ENCODE measurements at regions of chr1 and their contacts with region 1.

Region 1: GRCh38 chr1:115595279-115596079 is 46.3 kb upstream of the VANGL1 start:
- DNase-seq: peak; percentile 85
- ATAC-seq: peak; percentile 70
- H3K4me3 Mint-ChIP-seq: no peak overlapping the region
- H3K27ac Mint-ChIP-seq: no peak overlapping the region
- H3K4me1 Mint-ChIP-seq: no peaks in the 10 kb centered on the region
- H3K27me3 Mint-ChIP-seq: peaks cover 3% of the 10 kb centered on the region

Region 2: DNA sequence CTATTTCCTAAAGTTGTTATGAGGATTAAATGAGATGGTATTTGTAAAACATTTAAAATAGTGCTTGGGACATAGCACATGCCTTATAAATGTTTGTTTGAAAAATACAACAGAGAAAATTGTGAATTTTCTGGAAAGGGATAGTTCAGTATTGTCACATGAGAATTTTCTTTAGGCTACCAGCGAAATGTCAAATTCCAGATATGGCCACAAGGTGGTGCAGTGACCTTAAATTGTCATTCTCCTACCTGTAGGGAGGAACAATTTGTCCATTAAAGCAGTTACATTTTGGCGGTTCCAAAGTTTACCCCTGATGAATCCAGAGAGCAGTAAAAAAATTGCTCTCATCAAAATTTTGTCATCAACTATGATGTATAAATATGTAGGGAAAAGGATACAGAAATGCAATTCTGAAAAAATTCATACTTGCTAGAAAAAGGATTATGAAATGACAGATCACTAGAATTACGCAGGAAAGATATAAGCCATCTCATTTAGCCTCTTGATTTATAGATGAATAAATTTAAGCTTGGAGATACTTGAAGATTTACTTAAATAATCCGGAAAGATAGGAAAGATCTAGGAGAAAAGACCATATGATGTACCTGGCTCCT is 616.1 kb before region 1 on chr1:
- CTCF ChIA-PET with region 1: interaction called, 3 read pairs
- POLR2A ChIA-PET with region 1: no interaction called
- intact Hi-C with region 1: loop called in 1 of 2 experiments (anchors 5 kb)
- DNase-seq: peak; percentile 79
- ATAC-seq: no peak
- H3K4me3 Mint-ChIP-seq: no peak overlapping the region
- H3K27ac Mint-ChIP-seq: no peak overlapping the region
- H3K4me1 Mint-ChIP-seq: no peaks in the 10 kb centered on the region
- H3K27me3 Mint-ChIP-seq: peaks cover 9% of the 10 kb centered on the region

Region 3: DNA sequence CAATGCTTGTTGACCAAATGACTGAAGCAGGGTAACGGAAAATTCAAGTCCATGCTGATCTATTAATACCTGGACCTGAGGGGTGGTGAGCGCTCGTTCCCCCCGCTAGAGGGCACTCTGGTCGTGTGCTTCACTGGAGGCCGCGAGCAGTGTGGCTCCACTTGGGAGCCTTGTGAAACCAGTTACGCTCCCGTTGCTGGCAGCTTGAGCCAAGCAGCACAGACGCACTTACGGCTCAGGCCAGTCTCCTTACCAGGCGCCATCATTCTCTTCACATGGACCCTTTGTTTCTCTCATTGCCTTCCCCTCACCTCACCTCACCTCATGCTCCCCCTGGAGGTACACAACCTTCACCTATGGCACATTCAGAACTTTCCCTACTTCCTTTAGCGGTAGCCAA is 456.5 kb before region 1 on chr1:
- CTCF ChIA-PET with region 1: interaction called, 18 read pairs
- POLR2A ChIA-PET with region 1: no interaction called
- intact Hi-C with region 1: loop called (anchors 1 to 2 kb)
- DNase-seq: peak; percentile 79
- ATAC-seq: peak; percentile 88
- H3K4me3 Mint-ChIP-seq: peak overlapping the region; percentile 11
- H3K27ac Mint-ChIP-seq: no peak overlapping the region
- H3K4me1 Mint-ChIP-seq: peaks cover 4% of the 10 kb centered on the region
- H3K27me3 Mint-ChIP-seq: peaks cover 11% of the 10 kb centered on the region

Region 4: DNA sequence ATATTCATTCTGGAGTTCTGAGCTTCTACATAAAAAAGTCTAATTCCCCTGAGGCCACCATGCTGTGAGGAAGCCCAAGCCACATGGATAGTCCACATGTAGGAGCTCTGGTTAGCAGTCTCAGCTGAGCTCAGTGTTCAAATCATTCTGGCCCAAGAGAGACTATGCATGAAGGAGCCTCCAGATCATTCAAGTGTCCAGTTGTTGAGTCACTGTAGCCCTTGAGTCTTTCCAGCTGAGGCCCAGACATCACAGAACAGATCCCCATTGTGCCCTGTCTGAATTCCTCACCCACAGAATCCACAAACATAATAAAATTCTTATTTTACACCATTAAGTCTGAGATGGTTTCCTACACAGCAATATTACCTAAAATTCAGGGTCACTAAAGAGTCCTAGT is 150.4 kb before region 1 on chr1:
- CTCF ChIA-PET with region 1: no interaction called
- POLR2A ChIA-PET with region 1: no interaction called
- intact Hi-C with region 1: no loop called
- DNase-seq: no peak
- ATAC-seq: no peak
- H3K4me3 Mint-ChIP-seq: no peak overlapping the region
- H3K27ac Mint-ChIP-seq: no peak overlapping the region
- H3K4me1 Mint-ChIP-seq: no peaks in the 10 kb centered on the region
- H3K27me3 Mint-ChIP-seq: peaks cover 10% of the 10 kb centered on the region

Region 5: GRCh38 chr1:115469703-115470476 is 125.6 kb before region 1 on chr1:
- CTCF ChIA-PET with region 1: no interaction called
- POLR2A ChIA-PET with region 1: no interaction called
- intact Hi-C with region 1: loop called in 1 of 2 experiments (anchors 2 kb)
- DNase-seq: peak; percentile 59
- ATAC-seq: peak; percentile 30
- H3K4me3 Mint-ChIP-seq: no peak overlapping the region
- H3K27ac Mint-ChIP-seq: no peak overlapping the region
- H3K4me1 Mint-ChIP-seq: peaks cover 5% of the 10 kb centered on the region
- H3K27me3 Mint-ChIP-seq: peaks cover 3% of the 10 kb centered on the region

Measured in activated CD4-positive, alpha-beta T cell treated with anti-CD3 and anti-CD28 coated beads for 36 hours (primary cell).